ENCODE measurements at regions of chr4 and their contacts with region 1.

Region 1: DNA sequence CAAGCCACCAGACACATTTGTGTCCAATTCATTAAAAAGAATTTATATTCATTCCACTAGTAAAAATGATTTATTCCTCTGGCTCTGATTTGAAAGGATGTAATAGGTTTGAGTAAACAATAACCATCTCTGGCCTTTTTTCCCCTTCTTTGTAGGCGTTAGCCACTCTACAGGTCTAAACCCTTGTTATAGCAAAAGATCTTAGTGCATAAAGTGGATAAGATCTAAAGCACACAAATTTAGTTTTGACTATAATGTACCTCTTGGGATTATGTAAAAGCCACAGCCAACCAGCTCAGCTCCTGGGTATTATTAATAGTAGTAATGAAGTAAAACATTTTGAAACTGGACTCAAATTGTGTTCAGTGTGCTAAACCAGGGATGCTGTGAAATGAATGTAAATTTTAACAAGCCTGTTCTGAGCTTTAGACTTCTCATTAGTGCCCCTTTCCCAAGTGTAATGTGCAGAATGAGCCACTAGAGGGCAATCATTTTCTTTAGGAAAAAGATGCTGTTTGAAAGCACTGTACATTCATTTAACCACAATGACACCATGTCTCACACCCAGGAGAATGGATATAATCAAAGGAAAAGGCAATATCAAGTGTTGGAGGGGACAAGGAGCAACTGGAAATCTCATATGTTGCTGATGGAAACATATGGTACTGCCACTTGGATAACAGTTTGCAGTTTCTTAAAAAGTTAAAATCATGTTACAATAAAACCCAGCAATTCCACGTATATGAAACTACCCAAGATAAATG is 69.7 kb downstream of the KLHL8 start:
- DNase-seq: peak; percentile 71
- ATAC-seq: peak; percentile 89
- H3K4me3 ChIP-seq: no peak overlapping the region
- H3K27ac ChIP-seq: no peak overlapping the region
- H3K4me1 ChIP-seq: no peaks in the 10 kb centered on the region
- H3K27me3 ChIP-seq: no peaks in the 10 kb centered on the region
- CTCF ChIP-seq: peak; percentile 82
- POLR2A ChIP-seq: no peak
- RAD21 ChIP-seq: peak; percentile 80

Region 2: DNA sequence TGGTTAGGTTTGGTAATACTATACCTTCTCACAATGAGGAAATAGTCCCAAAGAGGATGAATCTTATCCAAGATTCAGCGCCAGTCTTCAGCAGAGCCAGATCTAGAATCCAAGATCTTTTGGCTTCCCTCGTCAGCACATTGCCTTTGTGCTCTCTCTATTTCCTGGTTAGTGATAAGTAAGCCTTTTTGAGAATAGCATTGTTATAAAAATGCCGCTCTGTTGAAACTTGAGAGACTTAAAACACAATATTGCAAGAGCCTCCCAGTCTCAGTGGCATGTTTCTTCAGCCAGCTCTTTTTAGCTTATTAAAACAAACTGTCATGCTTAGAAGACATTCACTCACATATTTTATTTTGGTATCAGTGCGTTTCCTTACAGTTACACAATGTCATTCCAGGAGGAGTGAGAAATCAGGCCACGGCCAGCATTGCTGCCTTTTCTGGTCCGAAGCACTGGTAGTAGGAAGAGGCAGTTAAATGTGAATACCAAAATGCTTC is 71.6 kb before region 1 on chr4:
- CTCF ChIA-PET with region 1: interaction called, 10 read pairs
- POLR2A ChIA-PET with region 1: no interaction called
- dilution Hi-C with region 1: no loop called
- in situ Hi-C with region 1: no loop called
- intact Hi-C with region 1: no loop called
- DNase-seq: peak; percentile 88
- ATAC-seq: peak; percentile 90
- H3K4me3 ChIP-seq: no peak overlapping the region; the same call in 1 of the 2 replicates
- H3K27ac ChIP-seq: peak overlapping the region; percentile 73
- H3K4me1 ChIP-seq: peaks cover 10% of the 10 kb centered on the region
- H3K27me3 ChIP-seq: no peaks in the 10 kb centered on the region
- CTCF ChIP-seq: no peak
- POLR2A ChIP-seq: no peak
- RAD21 ChIP-seq: peak; percentile 9; the same call in 1 of the 2 replicates

Region 3: DNA sequence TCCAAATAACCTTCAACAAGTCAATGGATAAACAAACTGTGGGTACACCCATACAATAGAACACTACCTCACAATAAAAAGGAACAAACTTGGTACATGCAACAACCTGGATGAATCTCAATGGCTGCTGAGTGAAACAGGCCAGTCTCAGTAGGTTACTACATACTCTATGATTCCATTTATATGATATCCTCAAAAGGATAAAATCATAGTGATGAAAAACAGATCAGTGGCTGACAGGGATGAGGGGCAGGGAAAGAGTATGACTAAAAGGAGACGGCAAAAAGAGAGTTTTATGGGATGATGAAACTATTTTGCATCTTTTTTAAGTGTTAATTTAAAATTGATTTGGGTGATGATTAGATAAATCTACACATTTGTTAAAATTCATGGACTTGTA is 53.9 kb after region 1 on chr4:
- CTCF ChIA-PET with region 1: no interaction called
- POLR2A ChIA-PET with region 1: no interaction called
- dilution Hi-C with region 1: no loop called
- in situ Hi-C with region 1: loop called (anchors 5 kb)
- intact Hi-C with region 1: no loop called
- DNase-seq: no peak
- ATAC-seq: peak; percentile 40
- H3K4me3 ChIP-seq: no peak overlapping the region
- H3K27ac ChIP-seq: no peak overlapping the region
- H3K4me1 ChIP-seq: peaks cover 2% of the 10 kb centered on the region; the same call in 1 of the 2 replicates
- H3K27me3 ChIP-seq: no peaks in the 10 kb centered on the region
- CTCF ChIP-seq: no peak
- POLR2A ChIP-seq: no peak
- RAD21 ChIP-seq: no peak

Region 4: DNA sequence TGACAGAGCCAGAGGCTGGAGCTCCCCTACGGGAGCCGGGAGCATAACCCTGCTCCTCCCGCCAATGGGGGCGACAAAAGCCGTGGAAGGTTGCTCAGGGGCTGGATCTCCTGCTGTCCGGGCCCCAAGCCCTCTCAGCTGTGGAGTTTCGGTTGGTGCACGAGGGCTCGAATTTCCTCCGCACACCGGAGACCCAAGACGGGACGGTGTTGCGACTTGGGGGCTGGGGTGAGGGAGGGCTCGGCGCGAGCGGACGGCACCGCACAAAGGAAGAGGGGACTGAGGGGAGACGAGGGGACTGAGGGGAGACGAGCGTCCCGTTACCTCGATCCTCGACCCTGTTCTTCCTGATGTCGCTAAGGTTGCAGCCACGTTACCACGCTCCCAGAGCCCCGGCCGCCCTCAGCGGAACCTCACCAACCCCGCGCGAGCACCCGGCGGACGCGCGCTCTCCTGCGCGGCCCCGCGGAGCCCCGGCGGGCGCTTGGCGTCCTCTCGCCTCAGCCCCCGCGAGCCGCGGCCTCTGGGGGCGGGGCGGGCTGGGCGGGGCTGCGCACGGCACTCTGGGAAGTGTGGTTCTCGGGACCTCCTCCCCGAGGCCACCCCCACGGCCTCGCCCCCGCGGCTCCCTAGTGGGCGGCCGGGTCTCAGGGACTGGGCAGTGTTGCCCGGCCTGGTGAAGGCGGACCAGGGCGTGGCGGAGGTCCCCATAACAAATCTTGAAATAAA is 69.6 kb after region 1 on chr4 and contains the start of gene KLHL8:
- CTCF ChIA-PET with region 1: interaction called, 4 read pairs
- POLR2A ChIA-PET with region 1: no interaction called
- dilution Hi-C with region 1: no loop called
- in situ Hi-C with region 1: no loop called
- intact Hi-C with region 1: loop called (anchors 5 kb)
- DNase-seq: peak; percentile 73
- ATAC-seq: peak; percentile 97
- H3K4me3 ChIP-seq: peak within 1 kb of the TSS; percentile 69
- H3K27ac ChIP-seq: peak within 1 kb of the TSS; percentile 90
- H3K4me1 ChIP-seq: no peaks in the 10 kb centered on the region
- H3K27me3 ChIP-seq: no peaks in the 10 kb centered on the region
- CTCF ChIP-seq: 0 out of 2 replicates have a peak, but pooled peaks have one; percentile 14
- POLR2A ChIP-seq: peak; percentile 72
- RAD21 ChIP-seq: no peak
- total RNA-seq, gene KLHL8: 9.5 and 18.6 TPM in 2 replicates